Mammary epithelial cell (primary cell): ENCODE measurements at regions of chr1 and their contacts with region 1.

Region 1: GRCh38 chr1:93734999-93735398 is 53.4 kb upstream of the BCAR3 start:
- DNase-seq: no peak
- H3K4me3 ChIP-seq: no peak overlapping the region
- H3K27ac ChIP-seq: peak overlapping the region; percentile 47
- H3K4me1 ChIP-seq: peaks cover 66% of the 10 kb centered on the region
- H3K27me3 ChIP-seq: no peaks in the 10 kb centered on the region
- CTCF ChIP-seq: peak in 1 of 2 donors; percentile 23

Region 2: DNA sequence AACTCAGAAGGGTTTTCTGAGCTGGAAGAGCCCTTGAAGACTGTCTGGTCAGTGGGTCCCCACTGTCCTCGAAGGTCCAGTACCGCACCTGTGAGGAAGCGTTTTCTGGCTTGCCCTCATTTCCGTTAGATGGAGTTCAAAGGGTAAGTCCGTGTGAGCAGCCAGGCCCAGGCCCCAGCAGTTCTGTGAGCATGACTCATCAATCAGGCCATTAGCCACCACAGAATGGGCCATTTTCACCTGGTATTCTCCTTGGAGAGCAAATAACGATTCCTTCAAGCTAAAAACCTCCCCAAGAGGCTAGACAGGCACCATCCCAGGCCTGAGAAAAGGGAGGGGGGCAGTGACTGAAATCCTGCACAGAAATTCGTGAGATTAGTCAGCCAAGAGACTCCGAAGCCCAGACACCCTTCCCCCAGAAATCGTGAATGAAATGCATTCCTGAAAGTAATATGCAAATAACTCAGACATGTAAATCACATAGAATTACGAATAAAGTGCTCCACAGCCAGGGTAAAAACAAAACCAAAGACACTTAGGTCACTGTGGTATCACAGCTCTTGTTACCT is 119.3 kb before region 1 on chr1:
- CTCF ChIA-PET with region 1: no interaction called
- dilution Hi-C with region 1: loop called (anchors 10 kb)
- in situ Hi-C with region 1: no loop called
- intact Hi-C with region 1: no loop called
- DNase-seq: peak; percentile 60
- H3K4me3 ChIP-seq: no peak overlapping the region
- H3K27ac ChIP-seq: peak overlapping the region; percentile 73
- H3K4me1 ChIP-seq: peaks cover 86% of the 10 kb centered on the region
- H3K27me3 ChIP-seq: no peaks in the 10 kb centered on the region
- CTCF ChIP-seq: no peak

Region 3: GRCh38 chr1:93680757-93681550 is 54.0 kb before region 1 on chr1:
- CTCF ChIA-PET with region 1: no interaction called
- dilution Hi-C with region 1: no loop called
- in situ Hi-C with region 1: no loop called
- intact Hi-C with region 1: loop called (anchors 1 kb)
- DNase-seq: peak; percentile 84
- H3K4me3 ChIP-seq: peak overlapping the region; percentile 59 to 94 (median 84)
- H3K27ac ChIP-seq: peak overlapping the region; percentile 85
- H3K4me1 ChIP-seq: peaks cover 42% of the 10 kb centered on the region
- H3K27me3 ChIP-seq: no peaks in the 10 kb centered on the region
- CTCF ChIP-seq: peak; percentile 60 to 72

Region 4: GRCh38 chr1:93701619-93702018 is 33.4 kb before region 1 on chr1:
- CTCF ChIA-PET with region 1: no interaction called
- dilution Hi-C with region 1: no loop called
- in situ Hi-C with region 1: no loop called
- intact Hi-C with region 1: loop called (anchors 1 kb)
- DNase-seq: peak; percentile 100
- H3K4me3 ChIP-seq: no peak overlapping the region
- H3K27ac ChIP-seq: peak overlapping the region; percentile 97
- H3K4me1 ChIP-seq: peaks cover 70% of the 10 kb centered on the region
- H3K27me3 ChIP-seq: no peaks in the 10 kb centered on the region
- CTCF ChIP-seq: no peak

Region 5: DNA sequence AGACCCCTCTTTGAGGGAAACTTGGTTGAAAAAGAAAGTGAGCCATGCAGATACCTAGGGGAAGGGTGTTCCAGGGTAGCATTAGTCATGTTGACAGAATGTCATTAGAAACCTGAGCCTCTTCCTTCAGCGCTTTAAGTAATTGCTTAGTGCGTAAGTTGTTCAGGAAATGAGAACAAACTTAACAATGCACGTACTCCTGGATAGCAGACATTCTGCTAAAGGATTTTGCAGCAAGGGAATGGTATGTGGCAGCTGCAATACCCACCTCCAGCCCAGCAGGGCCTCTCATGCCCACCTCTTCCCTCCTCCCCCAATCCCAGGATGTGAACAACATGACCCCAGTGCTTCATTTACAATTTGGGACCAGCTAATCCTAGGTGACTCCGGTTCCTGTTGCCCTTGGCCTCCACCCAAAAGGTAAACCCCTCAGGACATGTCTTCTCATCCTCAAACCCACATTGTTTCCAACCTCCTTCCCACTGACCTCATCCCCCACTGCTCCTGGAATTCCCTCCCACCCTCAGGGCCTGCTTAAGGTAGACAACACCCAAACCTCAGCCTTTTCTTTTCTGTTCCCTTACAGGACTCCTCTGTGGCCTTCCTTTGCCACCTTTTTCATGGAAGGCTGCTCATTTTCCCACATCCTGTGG is 44.7 kb after region 1 on chr1:
- CTCF ChIA-PET with region 1: no interaction called
- dilution Hi-C with region 1: no loop called
- in situ Hi-C with region 1: no loop called
- intact Hi-C with region 1: loop called (anchors 1 kb)
- DNase-seq: peak; percentile 100
- H3K4me3 ChIP-seq: no peak overlapping the region
- H3K27ac ChIP-seq: peak overlapping the region; percentile 99
- H3K4me1 ChIP-seq: peaks cover 58% of the 10 kb centered on the region
- H3K27me3 ChIP-seq: no peaks in the 10 kb centered on the region
- CTCF ChIP-seq: peak in 1 of 2 donors; percentile 22

Region 6: GRCh38 chr1:93839307-93839706 is 104.3 kb after region 1 on chr1:
- CTCF ChIA-PET with region 1: no interaction called
- dilution Hi-C with region 1: loop called (anchors 5 kb)
- in situ Hi-C with region 1: no loop called
- intact Hi-C with region 1: no loop called
- DNase-seq: peak; percentile 71
- H3K4me3 ChIP-seq: no peak overlapping the region
- H3K27ac ChIP-seq: no peak overlapping the region
- H3K4me1 ChIP-seq: peaks cover 30% of the 10 kb centered on the region
- H3K27me3 ChIP-seq: no peaks in the 10 kb centered on the region
- CTCF ChIP-seq: no peak